Sigmoid colon (tissue), 7 donors: ENCODE measurements at regions of chr2 and their contacts with region 1.

Region 1: GRCh38 chr2:202375609-202376408 is at the start of gene BMPR2:
- DNase-seq: peak; percentile 94
- H3K4me3 ChIP-seq: peak within 1 kb of the TSS; percentile 84 to 98 (median 92)
- H3K27ac ChIP-seq: peak within 1 kb of the TSS; percentile 97 to 99 (median 98)
- H3K4me1 ChIP-seq: peaks cover 0 to 33% (median 20%) of the 10 kb centered on the region in 4 donors
- H3K27me3 ChIP-seq: no peaks in the 10 kb centered on the region
- CTCF ChIP-seq: no peak
- EP300 ChIP-seq: peak in 2 of 4 donors; percentile 12 to 21
- POLR2A ChIP-seq: peak; percentile 73 to 78
- total RNA-seq, gene BMPR2: 49.9 to 74.9 (median 63.3) TPM

Region 2: GRCh38 chr2:202221873-202222272 is 153.9 kb before region 1 on chr2:
- intact Hi-C with region 1: no loop called
- DNase-seq: no peak
- H3K4me3 ChIP-seq: no peak overlapping the region
- H3K27ac ChIP-seq: no peak overlapping the region
- H3K4me1 ChIP-seq: peaks cover 0 to 11% (median 8%) of the 10 kb centered on the region in 4 donors
- H3K27me3 ChIP-seq: no peaks in the 10 kb centered on the region
- CTCF ChIP-seq: no peak
- EP300 ChIP-seq: no peak
- POLR2A ChIP-seq: no peak

Region 3: DNA sequence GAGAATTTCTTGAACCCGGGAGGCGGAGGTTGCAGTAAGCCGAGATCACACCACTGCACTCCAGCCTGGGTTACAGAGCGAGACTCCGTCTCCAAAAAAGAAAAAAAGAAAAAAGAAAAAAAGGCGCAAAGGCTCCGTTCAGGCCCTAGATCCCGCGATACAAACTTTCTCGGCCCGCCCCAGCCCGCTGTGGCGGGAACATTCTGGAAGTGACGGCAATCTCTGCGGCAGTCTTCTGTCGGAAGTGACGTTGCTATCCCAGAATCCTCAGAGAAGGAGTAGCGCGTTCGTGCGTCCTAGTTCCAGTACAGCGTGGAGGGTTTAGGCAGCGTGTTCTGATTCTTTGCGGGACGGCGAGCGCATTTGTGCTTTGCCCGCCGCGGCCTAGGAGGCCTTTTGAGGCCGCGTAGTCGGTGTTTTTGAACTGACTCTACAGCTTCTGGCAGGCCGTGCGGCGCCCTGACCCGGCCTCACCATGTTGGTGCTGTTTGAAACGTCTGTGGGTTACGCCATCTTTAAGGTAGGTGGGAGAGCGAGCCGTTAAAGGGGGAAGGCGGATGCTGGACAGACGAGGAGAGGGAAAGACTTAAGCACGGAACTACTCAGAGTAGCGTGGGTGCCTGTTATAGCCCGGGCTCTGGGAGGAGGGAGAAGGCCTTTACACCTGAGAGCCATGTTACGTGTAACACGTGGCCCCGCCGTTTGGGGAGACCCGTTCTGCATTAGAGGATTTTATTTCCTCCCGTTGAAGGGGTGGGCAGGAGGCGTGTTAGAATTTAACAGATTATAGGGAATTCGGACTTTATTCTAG is 110.1 kb before region 1 on chr2 and contains the start of gene NOP58:
- intact Hi-C with region 1: loop called (anchors 2 kb)
- DNase-seq: peak; percentile 97
- H3K4me3 ChIP-seq: peak within 1 kb of the TSS; percentile 73 to 95 (median 80)
- H3K27ac ChIP-seq: peak within 1 kb of the TSS; percentile 94 to 99 (median 96)
- H3K4me1 ChIP-seq: peaks cover 0 to 30% (median 28%) of the 10 kb centered on the region in 4 donors
- H3K27me3 ChIP-seq: no peaks in the 10 kb centered on the region
- CTCF ChIP-seq: no peak
- EP300 ChIP-seq: peak in 2 of 4 donors; percentile 61 to 91
- POLR2A ChIP-seq: peak; percentile 97
- total RNA-seq, gene NOP58: 35.9 to 91.1 (median 40.6) TPM

Region 4: GRCh38 chr2:202494300-202495229 is 118.8 kb after region 1 on chr2:
- intact Hi-C with region 1: loop called (anchors 5 kb)
- DNase-seq: no peak
- H3K4me3 ChIP-seq: no peak overlapping the region
- H3K27ac ChIP-seq: peak overlapping the region in 2 of 4 donors; percentile 7 to 18
- H3K4me1 ChIP-seq: peaks cover 0 to 19% (median 16%) of the 10 kb centered on the region in 4 donors
- H3K27me3 ChIP-seq: no peaks in the 10 kb centered on the region
- CTCF ChIP-seq: no peak
- EP300 ChIP-seq: no peak
- POLR2A ChIP-seq: no peak

Region 5: GRCh38 chr2:202541137-202541536 is 165.3 kb after region 1 on chr2:
- intact Hi-C with region 1: loop called (anchors 2 kb)
- DNase-seq: no peak
- H3K4me3 ChIP-seq: no peak overlapping the region
- H3K27ac ChIP-seq: no peak overlapping the region
- H3K4me1 ChIP-seq: peaks cover 0 to 19% (median 14%) of the 10 kb centered on the region in 4 donors
- H3K27me3 ChIP-seq: no peaks in the 10 kb centered on the region
- CTCF ChIP-seq: no peak
- EP300 ChIP-seq: no peak
- POLR2A ChIP-seq: no peak

Region 6: GRCh38 chr2:203014456-203015199 is 638.8 kb after region 1 on chr2 and contains the start of gene NBEAL1:
- intact Hi-C with region 1: loop called (anchors 10 kb)
- DNase-seq: peak; percentile 99
- H3K4me3 ChIP-seq: peak within 1 kb of the TSS; percentile 82 to 92 (median 87)
- H3K27ac ChIP-seq: peak within 1 kb of the TSS; percentile 84 to 96 (median 95)
- H3K4me1 ChIP-seq: peaks cover 0 to 46% (median 28%) of the 10 kb centered on the region in 4 donors
- H3K27me3 ChIP-seq: no peaks in the 10 kb centered on the region
- CTCF ChIP-seq: no peak
- EP300 ChIP-seq: peak in 2 of 4 donors; percentile 66 to 67
- POLR2A ChIP-seq: peak; percentile 85 to 87
- total RNA-seq, gene NBEAL1: 22.7 to 39.1 (median 25.8) TPM